ENCODE measurements at regions of chr10 and their contacts with region 1.

Region 1: DNA sequence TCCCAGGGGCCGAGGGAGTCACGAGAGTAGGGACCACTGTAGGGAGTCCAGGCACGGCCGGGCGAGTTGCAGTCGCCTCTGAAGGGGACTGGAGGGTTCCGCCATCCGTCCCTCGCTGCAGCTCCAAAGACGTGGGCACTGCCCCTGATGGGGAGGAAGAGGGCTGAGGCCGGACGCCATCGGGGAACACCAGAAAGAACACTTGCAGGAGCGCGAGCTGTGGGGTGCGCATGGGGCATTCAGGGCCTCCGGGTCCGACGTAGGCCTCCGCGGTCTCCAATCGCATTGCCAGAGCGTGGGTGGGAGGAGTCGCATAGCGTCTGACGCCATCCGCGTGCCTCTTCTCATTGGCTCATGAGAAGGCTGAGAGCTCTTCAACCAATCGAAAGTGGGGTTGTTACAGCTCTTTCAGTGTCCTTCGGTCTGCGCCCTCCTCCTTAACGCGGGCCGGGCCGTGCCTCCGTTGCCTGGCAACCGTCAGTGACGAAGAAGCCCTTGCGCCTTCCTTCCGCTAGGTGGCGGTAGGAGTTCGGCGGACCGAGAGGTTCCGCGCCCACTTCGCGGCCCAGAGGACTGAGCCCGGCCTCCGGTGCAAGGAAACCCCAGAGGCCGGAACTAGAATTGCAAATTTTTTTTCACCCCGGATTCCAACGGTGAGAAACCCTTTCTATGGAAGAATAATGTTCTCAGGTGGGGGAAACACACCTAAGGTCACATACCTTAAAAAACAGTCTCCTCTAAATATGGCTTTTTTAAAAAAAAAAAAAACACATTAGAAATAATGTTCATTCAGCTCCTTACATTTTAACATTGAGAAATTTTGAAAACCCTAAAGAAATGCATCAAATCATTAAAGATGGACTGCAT is at the start of gene TCTN3:
- DNase-seq: peak; percentile 99
- H3K4me3 ChIP-seq: peak within 1 kb of the TSS; percentile 97
- H3K27ac ChIP-seq: peak within 1 kb of the TSS; percentile 72
- H3K27me3 ChIP-seq: no peaks in the 10 kb centered on the region
- CTCF ChIP-seq: peak; percentile 99
- polyA plus RNA-seq, gene TCTN3: 51.3 and 55.3 TPM in 2 replicates

Region 2: GRCh38 chr10:95651346-95652060 is 42.4 kb before region 1 on chr10:
- CTCF ChIA-PET with region 1: interaction called, 32 read pairs
- POLR2A ChIA-PET with region 1: interaction called, 5 read pairs
- DNase-seq: no peak
- H3K4me3 ChIP-seq: no peak overlapping the region
- H3K27ac ChIP-seq: no peak overlapping the region
- H3K27me3 ChIP-seq: no peaks in the 10 kb centered on the region
- CTCF ChIP-seq: no peak

Region 3: GRCh38 chr10:95706986-95707385 is 13.1 kb after region 1 on chr10:
- CTCF ChIA-PET with region 1: interaction called, 89 read pairs
- POLR2A ChIA-PET with region 1: no interaction called
- DNase-seq: no peak
- H3K4me3 ChIP-seq: no peak overlapping the region
- H3K27ac ChIP-seq: no peak overlapping the region
- H3K27me3 ChIP-seq: no peaks in the 10 kb centered on the region
- CTCF ChIP-seq: no peak

Region 4: GRCh38 chr10:95755511-95756004 is 61.7 kb after region 1 on chr10:
- CTCF ChIA-PET with region 1: interaction called, 28 read pairs
- POLR2A ChIA-PET with region 1: no interaction called
- DNase-seq: no peak
- H3K4me3 ChIP-seq: no peak overlapping the region
- H3K27ac ChIP-seq: no peak overlapping the region
- H3K27me3 ChIP-seq: peaks cover 10% of the 10 kb centered on the region
- CTCF ChIP-seq: no peak

Region 5: GRCh38 chr10:95841661-95842498 is 148.0 kb after region 1 on chr10:
- CTCF ChIA-PET with region 1: interaction called, 881 read pairs
- POLR2A ChIA-PET with region 1: interaction called, 4 read pairs
- DNase-seq: peak; percentile 27
- H3K4me3 ChIP-seq: no peak overlapping the region
- H3K27ac ChIP-seq: no peak overlapping the region
- H3K27me3 ChIP-seq: peaks cover 3% of the 10 kb centered on the region
- CTCF ChIP-seq: peak; percentile 58

Region 6: GRCh38 chr10:95889830-95890229 is 195.9 kb after region 1 on chr10:
- CTCF ChIA-PET with region 1: interaction called, 34 read pairs
- POLR2A ChIA-PET with region 1: no interaction called
- DNase-seq: no peak
- H3K4me3 ChIP-seq: no peak overlapping the region
- H3K27ac ChIP-seq: no peak overlapping the region
- H3K27me3 ChIP-seq: no peaks in the 10 kb centered on the region
- CTCF ChIP-seq: no peak

Region 7: GRCh38 chr10:96138102-96138501 is 444.2 kb after region 1 on chr10:
- CTCF ChIA-PET with region 1: interaction called, 10 read pairs
- POLR2A ChIA-PET with region 1: no interaction called
- DNase-seq: no peak
- H3K4me3 ChIP-seq: no peak overlapping the region
- H3K27ac ChIP-seq: no peak overlapping the region
- H3K27me3 ChIP-seq: no peaks in the 10 kb centered on the region
- CTCF ChIP-seq: no peak

Measured in AG04450 (cell line).